Esophagus muscularis mucosa (tissue), 4 donors: ENCODE measurements at regions of chr19 and their contacts with region 1.

Region 1: GRCh38 chr19:47790398-47790814 is 11.9 kb downstream of the SELENOW start:
- DNase-seq: peak; percentile 95
- H3K4me3 ChIP-seq: no peak overlapping the region
- H3K27ac ChIP-seq: no peak overlapping the region
- H3K4me1 ChIP-seq: peaks cover 0 to 31% (median 27%) of the 10 kb centered on the region in 4 donors
- H3K27me3 ChIP-seq: no peaks in the 10 kb centered on the region
- CTCF ChIP-seq: peak; percentile 69 to 92 (median 81)
- EP300 ChIP-seq: no peak
- POLR2A ChIP-seq: no peak

Region 2: GRCh38 chr19:47479701-47480461 is 310.5 kb before region 1 on chr19:
- intact Hi-C with region 1: no loop called
- DNase-seq: no peak
- H3K4me3 ChIP-seq: peak overlapping the region in 3 of 4 donors; percentile 12 to 44 (median 13)
- H3K27ac ChIP-seq: no peak overlapping the region
- H3K4me1 ChIP-seq: peaks cover 12 to 25% (median 21%) of the 10 kb centered on the region in 4 donors
- H3K27me3 ChIP-seq: peaks cover 0 to 11% (median 0%) of the 10 kb centered on the region in 4 donors
- CTCF ChIP-seq: no peak
- EP300 ChIP-seq: no peak
- POLR2A ChIP-seq: no peak

Region 3: DNA sequence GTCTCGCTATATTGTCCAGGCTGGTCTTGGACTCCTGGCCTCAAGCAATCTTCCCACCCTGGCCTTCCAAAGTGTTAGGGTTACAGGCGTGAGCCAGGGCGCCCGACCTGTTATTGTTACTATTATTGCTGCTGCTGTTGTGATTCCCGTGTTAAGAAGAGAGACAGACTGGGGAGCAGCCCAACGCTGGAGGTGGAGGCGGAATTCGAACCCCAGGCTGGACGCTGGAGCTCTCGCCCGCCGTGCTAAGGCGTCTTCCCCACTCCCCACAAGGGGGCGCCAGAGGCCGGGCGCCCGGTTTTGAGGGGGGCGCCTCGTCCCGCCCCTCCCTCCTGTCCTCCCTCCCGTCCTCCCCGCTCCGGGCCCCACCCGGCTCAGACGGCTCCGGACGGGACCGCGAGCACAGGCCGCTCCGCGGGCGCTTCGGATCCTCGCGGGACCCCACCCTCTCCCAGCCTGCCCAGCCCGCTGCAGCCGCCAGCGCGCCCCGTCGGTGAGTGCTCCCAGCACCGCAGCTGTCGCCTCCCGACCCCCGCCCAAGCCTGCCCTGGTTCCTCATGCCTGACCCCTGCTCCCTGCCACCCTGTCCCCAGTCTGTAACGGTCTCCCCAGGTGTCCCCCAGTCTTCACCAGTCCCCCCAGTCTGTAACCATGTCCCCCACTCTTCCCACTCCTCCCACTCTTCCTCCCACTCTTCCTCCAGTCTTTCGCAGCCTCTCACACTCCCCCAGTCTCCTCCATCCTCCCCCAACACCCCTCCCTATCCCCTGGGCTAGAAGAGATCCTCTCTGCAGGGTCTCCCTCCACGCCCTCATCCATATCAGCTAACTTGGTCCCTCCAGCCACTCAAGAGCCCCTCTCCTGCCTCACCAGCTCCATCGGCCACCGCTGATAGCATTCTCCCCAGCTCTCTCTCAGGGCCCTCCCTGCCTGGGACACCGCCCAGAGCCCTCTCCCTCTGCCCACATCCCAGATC is 77.1 kb before region 1 on chr19 and contains the start of gene EHD2:
- intact Hi-C with region 1: loop called (anchors 5 kb)
- DNase-seq: no peak
- H3K4me3 ChIP-seq: peak within 1 kb of the TSS; percentile 70 to 95 (median 81)
- H3K27ac ChIP-seq: peak within 1 kb of the TSS; percentile 87 to 97 (median 92)
- H3K4me1 ChIP-seq: peaks cover 37 to 53% (median 48%) of the 10 kb centered on the region in 4 donors
- H3K27me3 ChIP-seq: no peaks in the 10 kb centered on the region
- CTCF ChIP-seq: peak; percentile 97 to 99 (median 99)
- EP300 ChIP-seq: no peak
- POLR2A ChIP-seq: peak; percentile 90
- total RNA-seq, gene EHD2: 154 to 444 (median 250) TPM

Region 4: DNA sequence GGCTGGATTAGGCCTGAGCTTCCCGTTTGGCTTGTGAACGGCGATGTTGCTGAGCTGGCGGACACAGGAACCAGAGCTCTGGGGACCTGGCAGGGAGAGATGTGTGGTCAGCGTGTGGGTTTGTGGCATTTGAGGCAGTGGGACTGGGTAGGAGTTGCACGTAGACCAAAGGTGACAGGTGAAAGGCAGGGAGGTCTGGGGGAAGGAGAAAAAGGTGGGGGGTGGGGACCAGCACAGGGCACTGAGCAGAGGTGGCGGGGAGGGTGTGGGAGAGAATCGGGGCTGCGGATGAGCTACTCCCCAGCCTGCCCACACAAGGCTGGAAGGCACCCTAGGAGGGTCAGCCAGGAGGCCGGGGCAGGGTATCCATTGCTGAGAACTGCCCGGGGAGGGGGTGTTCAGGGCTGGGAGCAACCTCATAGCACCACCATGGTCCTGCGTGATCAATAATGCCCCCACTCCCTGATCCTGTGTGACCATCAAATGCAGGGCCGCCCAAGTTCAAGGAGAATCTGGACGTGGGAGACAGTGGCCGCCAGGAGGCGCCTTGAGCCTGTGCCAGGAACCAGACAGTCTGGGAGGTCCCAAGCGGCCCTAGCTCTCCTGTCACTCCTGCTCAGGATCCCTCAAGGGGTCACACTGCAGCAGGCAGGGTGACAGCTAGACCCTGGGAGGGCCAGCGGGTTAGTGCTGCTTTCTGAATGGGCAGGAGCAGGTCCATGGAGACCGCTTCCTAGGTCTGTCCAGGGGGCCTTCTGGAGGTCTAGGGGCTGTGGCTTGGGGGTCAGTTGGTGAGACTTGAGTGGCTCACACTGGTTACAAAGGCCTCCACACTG is 24.7 kb before region 1 on chr19:
- intact Hi-C with region 1: loop called (anchors 1 kb)
- DNase-seq: no peak
- H3K4me3 ChIP-seq: no peak overlapping the region
- H3K27ac ChIP-seq: no peak overlapping the region
- H3K4me1 ChIP-seq: peaks cover 7 to 10% (median 9%) of the 10 kb centered on the region in 4 donors
- H3K27me3 ChIP-seq: no peaks in the 10 kb centered on the region
- CTCF ChIP-seq: peak; percentile 80 to 90 (median 83)
- EP300 ChIP-seq: no peak
- POLR2A ChIP-seq: no peak